Panc1 (cell line): ENCODE measurements at regions of chr14 and their contacts with region 1.

Region 1: GRCh38 chr14:22822571-22823098 is 7.1 kb upstream of the MRPL52 start:
- DNase-seq: no peak
- ATAC-seq: peak; percentile 91
- H3K4me3 ChIP-seq: peak overlapping the region; percentile 35 to 56
- H3K27ac ChIP-seq: peak overlapping the region; percentile 79
- H3K4me1 ChIP-seq: peaks cover 23% of the 10 kb centered on the region
- H3K27me3 ChIP-seq: no peaks in the 10 kb centered on the region
- CTCF ChIP-seq: peak; percentile 84

Region 2: DNA sequence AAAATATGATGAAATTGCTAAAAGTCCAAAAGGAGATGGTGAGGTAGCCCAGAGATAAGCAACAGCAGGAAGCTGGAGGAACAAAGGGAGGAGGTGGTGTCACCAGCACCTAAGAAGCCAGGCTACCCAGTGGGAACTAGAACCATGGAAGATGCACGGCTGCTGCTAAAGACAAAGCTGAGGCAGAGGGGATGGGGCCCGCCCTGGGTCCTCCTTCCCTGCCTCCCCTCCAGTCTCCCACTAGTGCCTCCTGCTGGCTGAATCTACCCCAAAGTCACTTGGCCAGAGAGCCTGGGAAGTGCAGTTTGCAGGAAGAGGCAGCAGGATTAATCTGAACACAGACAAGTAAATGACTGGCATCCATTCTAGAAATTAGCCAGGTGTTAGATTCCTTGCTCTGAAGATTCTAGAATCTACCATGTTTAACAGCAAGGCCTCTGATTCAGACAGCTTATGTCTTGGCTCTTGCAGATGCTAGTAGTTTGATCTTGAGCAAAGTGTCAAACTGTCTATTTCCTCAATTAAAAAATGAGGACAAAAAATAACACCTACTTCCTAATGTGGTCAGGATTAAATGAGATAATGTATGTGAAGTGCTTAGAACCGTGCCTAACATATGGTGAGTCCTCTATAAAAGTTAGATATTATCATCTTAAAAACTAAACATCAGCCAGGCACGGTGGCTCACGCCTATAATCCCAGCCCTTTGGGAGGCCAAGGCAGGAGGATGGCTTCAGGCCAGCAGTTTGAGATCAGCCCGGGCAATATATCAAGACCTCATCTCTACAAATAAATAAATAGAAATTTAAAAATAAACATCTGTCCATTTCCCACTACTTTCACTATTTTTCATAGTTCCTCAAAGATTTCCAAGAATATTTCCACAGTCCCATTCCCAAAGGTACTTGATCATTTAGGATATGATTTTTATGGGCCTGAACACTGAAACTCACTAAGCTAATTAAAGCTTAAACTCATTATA is 43.1 kb after region 1 on chr14:
- CTCF ChIA-PET with region 1: interaction called, 7 read pairs
- POLR2A ChIA-PET with region 1: interaction called, 14 read pairs
- in situ Hi-C with region 1: no loop called
- intact Hi-C with region 1: no loop called
- DNase-seq: no peak
- ATAC-seq: no peak
- H3K4me3 ChIP-seq: no peak overlapping the region
- H3K27ac ChIP-seq: no peak overlapping the region
- H3K4me1 ChIP-seq: peaks cover 4% of the 10 kb centered on the region; the same call in 1 of the 2 replicates
- H3K27me3 ChIP-seq: no peaks in the 10 kb centered on the region
- CTCF ChIP-seq: peak; percentile 12; the same call in 1 of the 2 replicates

Region 3: DNA sequence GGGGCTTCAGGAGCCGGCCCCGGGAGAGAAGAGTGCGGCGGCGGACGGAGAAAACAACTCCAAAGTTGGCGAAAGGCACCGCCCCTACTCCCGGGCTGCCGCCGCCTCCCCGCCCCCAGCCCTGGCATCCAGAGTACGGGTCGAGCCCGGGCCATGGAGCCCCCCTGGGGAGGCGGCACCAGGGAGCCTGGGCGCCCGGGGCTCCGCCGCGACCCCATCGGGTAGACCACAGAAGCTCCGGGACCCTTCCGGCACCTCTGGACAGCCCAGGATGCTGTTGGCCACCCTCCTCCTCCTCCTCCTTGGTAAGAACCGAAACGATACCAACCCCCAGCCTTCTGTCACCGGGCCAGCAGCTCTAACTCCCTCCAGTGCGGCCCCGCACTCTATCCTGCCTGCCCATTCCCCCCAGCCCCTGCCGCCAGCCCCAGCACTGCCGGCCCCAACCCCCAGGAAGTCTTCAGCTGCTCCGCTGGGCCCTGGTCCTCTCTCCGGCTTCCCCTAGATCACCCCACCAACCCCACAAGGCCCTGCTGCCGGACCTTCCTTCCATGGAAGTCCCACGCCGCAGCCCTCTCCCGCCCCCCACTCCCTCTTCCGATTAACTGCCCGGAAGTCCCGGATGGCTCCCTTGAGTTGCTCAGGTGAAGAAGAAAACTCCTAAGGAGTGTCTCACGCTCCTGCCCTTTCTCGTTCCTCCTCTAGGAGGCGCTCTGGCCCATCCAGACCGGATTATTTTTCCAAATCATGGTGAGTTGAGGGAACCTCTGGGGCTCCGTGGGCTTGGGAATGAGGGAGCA is 49.6 kb after region 1 on chr14:
- CTCF ChIA-PET with region 1: interaction called, 14 read pairs
- POLR2A ChIA-PET with region 1: interaction called, 5 read pairs
- in situ Hi-C with region 1: no loop called
- intact Hi-C with region 1: no loop called
- DNase-seq: no peak
- ATAC-seq: peak; percentile 75
- H3K4me3 ChIP-seq: peak overlapping the region; percentile 67 to 84
- H3K27ac ChIP-seq: peak overlapping the region; percentile 80
- H3K4me1 ChIP-seq: peaks cover 8% of the 10 kb centered on the region; the same call in 1 of the 2 replicates
- H3K27me3 ChIP-seq: no peaks in the 10 kb centered on the region
- CTCF ChIP-seq: peak; percentile 93

Region 4: GRCh38 chr14:23787436-23787835 is 964.8 kb after region 1 on chr14:
- CTCF ChIA-PET with region 1: no interaction called
- POLR2A ChIA-PET with region 1: no interaction called
- in situ Hi-C with region 1: no loop called
- intact Hi-C with region 1: no loop called
- DNase-seq: no peak
- ATAC-seq: no peak
- H3K4me3 ChIP-seq: no peak overlapping the region
- H3K27ac ChIP-seq: no peak overlapping the region
- H3K4me1 ChIP-seq: no peaks in the 10 kb centered on the region
- H3K27me3 ChIP-seq: no peaks in the 10 kb centered on the region
- CTCF ChIP-seq: no peak